Panc1 (cell line): ENCODE measurements at regions of chr9 and their contacts with region 1.

Region 1: DNA sequence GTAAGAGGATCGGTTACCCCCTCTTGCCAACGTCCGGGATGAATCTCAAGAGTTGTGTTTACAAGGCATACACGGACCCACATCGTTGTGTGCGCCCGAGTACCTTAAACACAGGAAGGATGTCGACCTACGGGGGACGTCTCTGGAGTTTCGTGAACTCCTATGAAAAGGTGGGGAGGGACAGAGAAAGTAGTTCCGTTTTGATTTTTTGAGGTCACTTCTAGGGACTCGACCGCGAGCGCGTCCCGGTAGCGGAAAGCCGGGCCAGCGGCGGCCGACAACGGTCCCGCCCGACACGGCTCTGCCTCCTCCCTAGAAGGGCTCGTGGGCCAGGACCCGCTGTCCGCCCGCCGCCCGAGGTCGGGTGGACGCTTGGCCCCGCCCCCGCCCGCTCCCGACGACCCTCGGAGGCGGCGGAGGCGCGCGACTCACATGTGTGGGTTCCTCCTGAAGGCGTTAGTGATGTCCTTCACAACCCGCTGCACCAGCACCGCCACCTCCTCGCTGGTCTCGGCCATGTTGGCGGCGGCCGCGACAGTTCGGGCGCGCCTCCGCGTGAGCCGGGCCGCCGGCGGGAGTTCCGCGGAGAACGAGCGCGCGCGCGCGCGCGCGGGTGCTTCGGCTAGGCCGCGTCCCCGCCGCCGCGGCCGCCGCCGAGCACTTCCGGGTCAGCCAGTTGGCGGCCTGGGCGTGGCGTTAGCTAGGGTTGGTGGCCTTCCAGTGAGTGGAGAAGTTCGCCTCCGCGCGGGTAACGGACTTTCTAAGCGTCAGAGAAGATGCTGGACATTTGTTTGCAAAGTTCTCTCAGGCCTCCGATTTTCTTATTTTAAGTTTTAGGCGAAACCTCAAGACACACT is at the start of gene PTAR1:
- DNase-seq: peak; percentile 32
- ATAC-seq: peak; percentile 98
- H3K4me3 ChIP-seq: peak within 1 kb of the TSS; percentile 76 to 88
- H3K27ac ChIP-seq: peak within 1 kb of the TSS; percentile 96
- H3K4me1 ChIP-seq: peaks cover 8% of the 10 kb centered on the region; the same call in 1 of the 2 replicates
- H3K27me3 ChIP-seq: no peaks in the 10 kb centered on the region
- CTCF ChIP-seq: no peak
- total RNA-seq, gene PTAR1: 26.0 TPM

Region 2: DNA sequence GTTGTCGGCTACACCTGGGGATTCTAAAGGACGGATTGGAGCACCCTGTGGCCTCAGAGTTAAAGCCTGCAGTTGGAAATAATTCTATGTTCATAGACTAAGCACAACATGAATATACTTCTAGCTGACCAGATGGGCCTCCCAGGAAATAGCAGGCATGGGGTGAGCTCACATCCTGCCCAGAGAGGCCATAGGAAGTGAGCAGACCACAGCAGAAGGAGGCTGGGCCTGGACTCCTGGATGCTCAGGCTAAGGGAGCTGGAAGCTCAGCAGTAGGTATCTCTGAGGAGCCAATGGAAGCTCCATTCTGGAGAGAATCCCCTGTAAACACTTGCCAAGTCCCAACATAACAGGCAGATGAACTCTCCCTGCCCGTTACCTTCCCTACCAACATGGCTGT is 412.7 kb before region 1 on chr9:
- CTCF ChIA-PET with region 1: no interaction called
- POLR2A ChIA-PET with region 1: no interaction called
- in situ Hi-C with region 1: no loop called
- intact Hi-C with region 1: no loop called
- DNase-seq: no peak
- ATAC-seq: no peak
- H3K4me3 ChIP-seq: no peak overlapping the region
- H3K27ac ChIP-seq: no peak overlapping the region
- H3K4me1 ChIP-seq: no peaks in the 10 kb centered on the region
- H3K27me3 ChIP-seq: no peaks in the 10 kb centered on the region
- CTCF ChIP-seq: no peak

Region 3: DNA sequence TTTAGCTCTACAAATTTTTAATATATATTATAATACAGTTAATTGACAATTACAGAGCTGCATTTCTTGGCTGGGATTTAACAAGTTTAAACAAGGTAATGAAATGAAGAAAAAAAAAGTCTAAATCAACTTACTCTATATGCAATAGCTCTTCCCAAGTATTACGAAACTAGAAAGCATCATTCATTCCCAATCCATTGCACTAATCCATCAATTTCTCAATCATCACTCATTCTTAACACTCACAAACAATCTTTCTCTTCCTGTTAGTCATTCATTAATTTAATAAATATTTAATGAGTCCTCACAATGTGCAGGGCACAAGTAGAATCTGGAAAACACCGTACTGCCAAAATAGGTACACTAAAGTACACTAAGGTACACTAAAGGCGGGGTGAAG is 44.6 kb before region 1 on chr9:
- CTCF ChIA-PET with region 1: no interaction called
- POLR2A ChIA-PET with region 1: no interaction called
- in situ Hi-C with region 1: no loop called
- intact Hi-C with region 1: no loop called
- DNase-seq: no peak
- ATAC-seq: no peak
- H3K4me3 ChIP-seq: no peak overlapping the region
- H3K27ac ChIP-seq: no peak overlapping the region
- H3K4me1 ChIP-seq: no peaks in the 10 kb centered on the region
- H3K27me3 ChIP-seq: no peaks in the 10 kb centered on the region
- CTCF ChIP-seq: no peak

Region 4: GRCh38 chr9:69882998-69883565 is 123.4 kb after region 1 on chr9:
- CTCF ChIA-PET with region 1: no interaction called
- POLR2A ChIA-PET with region 1: no interaction called
- in situ Hi-C with region 1: no loop called
- intact Hi-C with region 1: loop called (anchors 5 kb)
- DNase-seq: no peak
- ATAC-seq: no peak
- H3K4me3 ChIP-seq: no peak overlapping the region
- H3K27ac ChIP-seq: no peak overlapping the region
- H3K4me1 ChIP-seq: no peaks in the 10 kb centered on the region; the same call in 1 of the 2 replicates
- H3K27me3 ChIP-seq: no peaks in the 10 kb centered on the region
- CTCF ChIP-seq: no peak

Region 5: GRCh38 chr9:70283848-70284247 is 524.2 kb after region 1 on chr9:
- CTCF ChIA-PET with region 1: no interaction called
- POLR2A ChIA-PET with region 1: interaction called, 15 read pairs
- in situ Hi-C with region 1: no loop called
- intact Hi-C with region 1: no loop called
- DNase-seq: no peak
- ATAC-seq: no peak
- H3K4me3 ChIP-seq: no peak overlapping the region
- H3K27ac ChIP-seq: no peak overlapping the region
- H3K4me1 ChIP-seq: no peaks in the 10 kb centered on the region
- H3K27me3 ChIP-seq: no peaks in the 10 kb centered on the region
- CTCF ChIP-seq: no peak